ENCODE measurements at regions of chr17 and their contacts with region 1.

Region 1: GRCh38 chr17:40113110-40113906 is 8.5 kb upstream of the MSL1 start:
- DNase-seq: peak; percentile 96
- ATAC-seq: peak; percentile 82
- H3K4me3 Mint-ChIP-seq: peak overlapping the region; percentile 72
- H3K27ac Mint-ChIP-seq: peak overlapping the region; percentile 86
- H3K4me1 Mint-ChIP-seq: peaks cover 55% of the 10 kb centered on the region
- H3K27me3 Mint-ChIP-seq: no peaks in the 10 kb centered on the region

Region 2: DNA sequence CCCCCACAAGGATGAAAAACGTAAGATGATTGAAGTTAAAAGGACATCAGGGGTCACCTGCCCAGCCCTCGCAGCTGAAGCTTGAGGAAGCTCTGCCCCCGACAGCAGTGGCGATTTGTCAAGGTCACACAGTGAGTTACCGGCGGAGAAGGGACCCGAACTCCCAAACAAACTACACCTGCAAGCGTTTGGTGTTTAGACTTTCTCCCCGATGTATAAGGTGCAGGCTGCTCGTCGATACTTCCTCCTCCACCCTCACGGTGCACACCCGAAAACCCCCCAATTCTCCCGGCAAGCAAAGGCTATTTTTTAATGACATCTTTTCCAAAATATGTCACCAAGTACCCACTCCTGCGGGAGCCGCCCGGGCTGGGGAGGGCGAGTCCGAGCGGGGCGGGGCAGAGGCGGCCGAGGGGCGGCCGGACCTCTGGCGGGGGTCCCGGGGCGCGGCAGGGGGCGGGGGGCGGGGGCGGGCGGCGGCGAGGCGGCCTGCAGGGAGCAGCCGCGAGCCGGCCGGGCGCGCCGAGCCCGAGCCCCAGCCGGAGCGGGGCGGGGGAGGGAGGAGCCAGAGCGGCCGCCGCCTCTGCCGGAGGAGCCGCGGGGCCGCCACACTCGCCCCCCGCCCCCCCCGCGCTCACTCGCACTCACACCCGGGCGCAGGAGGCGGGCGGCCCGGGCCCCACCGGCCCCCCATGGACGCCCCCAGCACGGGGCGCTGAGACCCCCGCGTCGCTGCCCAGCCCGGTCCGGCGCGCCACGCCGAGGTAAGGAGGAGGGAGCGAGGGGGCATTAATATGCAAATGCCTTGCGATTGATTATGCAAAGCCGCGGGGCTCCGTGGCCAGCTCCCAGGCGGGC is 50.8 kb before region 1 on chr17 and contains the start of gene THRA:
- CTCF ChIA-PET with region 1: interaction called, 17 read pairs
- POLR2A ChIA-PET with region 1: no interaction called
- intact Hi-C with region 1: loop called (anchors 1 to 2 kb)
- DNase-seq: peak; percentile 82
- ATAC-seq: peak; percentile 84
- H3K4me3 Mint-ChIP-seq: peak within 1 kb of the TSS; percentile 77
- H3K27ac Mint-ChIP-seq: peak within 1 kb of the TSS; percentile 74
- H3K4me1 Mint-ChIP-seq: peaks cover 45% of the 10 kb centered on the region
- H3K27me3 Mint-ChIP-seq: no peaks in the 10 kb centered on the region
- total RNA-seq, gene THRA: 12.9 to 13.1 TPM

Region 3: GRCh38 chr17:40130352-40131042 is 17.2 kb after region 1 on chr17:
- CTCF ChIA-PET with region 1: interaction called, 25 read pairs
- POLR2A ChIA-PET with region 1: interaction called, 12 read pairs
- intact Hi-C with region 1: no loop called
- DNase-seq: no peak
- ATAC-seq: no peak
- H3K4me3 Mint-ChIP-seq: no peak overlapping the region
- H3K27ac Mint-ChIP-seq: peak overlapping the region; percentile 62
- H3K4me1 Mint-ChIP-seq: peaks cover 11% of the 10 kb centered on the region
- H3K27me3 Mint-ChIP-seq: no peaks in the 10 kb centered on the region

Region 4: GRCh38 chr17:40157973-40158372 is 44.7 kb after region 1 on chr17:
- CTCF ChIA-PET with region 1: interaction called, 14 read pairs
- POLR2A ChIA-PET with region 1: interaction called, 3 read pairs
- intact Hi-C with region 1: loop called (anchors 5 kb)
- DNase-seq: no peak
- ATAC-seq: no peak
- H3K4me3 Mint-ChIP-seq: no peak overlapping the region
- H3K27ac Mint-ChIP-seq: peak overlapping the region; percentile 24
- H3K4me1 Mint-ChIP-seq: peaks cover 35% of the 10 kb centered on the region
- H3K27me3 Mint-ChIP-seq: no peaks in the 10 kb centered on the region

Region 5: DNA sequence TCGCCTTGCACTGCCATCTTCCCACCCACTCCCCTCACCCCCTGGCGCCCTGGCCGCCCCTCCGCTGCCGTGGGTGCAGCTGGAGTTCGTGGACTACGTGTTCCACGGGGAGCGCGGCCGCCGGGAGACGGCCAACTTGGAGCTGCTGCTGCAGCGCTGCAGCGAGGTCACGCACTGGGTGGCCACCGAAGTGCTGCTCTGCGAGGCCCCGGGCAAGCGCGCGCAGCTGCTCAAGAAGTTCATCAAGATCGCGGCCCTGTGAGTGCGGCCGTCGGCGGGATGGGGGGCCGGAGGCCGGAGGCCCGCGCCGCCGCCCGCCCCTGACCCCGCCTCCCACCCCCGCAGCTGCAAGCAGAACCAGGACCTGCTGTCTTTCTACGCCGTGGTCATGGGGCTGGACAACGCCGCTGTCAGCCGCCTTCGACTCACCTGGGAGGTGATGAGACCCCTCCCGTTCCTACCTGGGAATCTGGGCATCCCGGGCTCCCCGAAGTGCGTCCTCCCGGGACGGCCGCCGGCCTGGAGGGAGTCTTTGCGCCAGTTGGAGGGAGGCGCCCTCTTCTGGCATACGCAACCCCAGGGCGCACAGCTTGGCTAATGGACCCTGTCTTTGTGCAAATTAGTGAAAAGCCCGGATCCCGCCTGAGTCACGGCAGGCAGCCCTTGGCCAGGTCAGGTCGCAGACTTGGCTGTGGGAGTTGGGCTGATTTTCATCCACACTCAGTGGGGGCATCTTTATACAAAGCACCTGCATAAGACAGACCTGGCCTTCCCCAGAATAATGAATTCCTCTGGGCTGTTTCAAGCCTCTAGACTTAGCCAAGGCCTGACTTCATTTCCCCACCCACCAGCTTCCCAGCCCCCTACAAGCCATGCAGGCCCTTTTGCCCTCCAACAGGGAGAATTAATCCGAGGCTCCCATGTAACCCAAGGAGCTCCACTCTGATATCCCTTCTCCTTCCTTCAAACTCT is 78.2 kb after region 1 on chr17:
- CTCF ChIA-PET with region 1: interaction called, 46 read pairs
- POLR2A ChIA-PET with region 1: no interaction called
- intact Hi-C with region 1: loop called (anchors 1 to 2 kb)
- DNase-seq: peak; percentile 84
- ATAC-seq: peak; percentile 91
- H3K4me3 Mint-ChIP-seq: peak overlapping the region; percentile 79
- H3K27ac Mint-ChIP-seq: peak overlapping the region; percentile 76
- H3K4me1 Mint-ChIP-seq: peaks cover 7% of the 10 kb centered on the region
- H3K27me3 Mint-ChIP-seq: no peaks in the 10 kb centered on the region

Measured in activated CD4-positive, alpha-beta T cell treated with anti-CD3 and anti-CD28 coated beads for 36 hours (primary cell).